ENCODE measurements at regions of chr22 and their contacts with region 1.

Region 1: GRCh38 chr22:40922484-40923303 is 28.5 kb upstream of the RBX1 start:
- DNase-seq: peak; percentile 59
- H3K4me3 ChIP-seq: no peak overlapping the region
- CTCF ChIP-seq: peak; percentile 50

Region 2: DNA sequence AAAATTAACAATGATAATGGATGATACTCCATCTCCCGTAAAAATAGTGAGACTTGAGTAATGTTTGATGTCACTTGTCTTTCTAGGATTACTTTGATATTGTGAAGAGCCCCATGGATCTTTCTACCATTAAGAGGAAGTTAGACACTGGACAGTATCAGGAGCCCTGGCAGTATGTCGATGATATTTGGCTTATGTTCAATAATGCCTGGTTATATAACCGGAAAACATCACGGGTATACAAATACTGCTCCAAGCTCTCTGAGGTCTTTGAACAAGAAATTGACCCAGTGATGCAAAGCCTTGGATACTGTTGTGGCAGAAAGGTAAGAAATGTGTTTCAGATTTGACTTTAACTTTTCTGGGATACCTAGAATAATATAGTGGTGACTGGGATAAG is 234.4 kb after region 1 on chr22:
- in situ Hi-C with region 1: loop called (anchors 25 kb)
- DNase-seq: no peak
- H3K4me3 ChIP-seq: no peak overlapping the region
- CTCF ChIP-seq: no peak